CD8-positive, alpha-beta memory T cell (primary cell): ENCODE measurements at regions of chr7 and their contacts with region 1.

Region 1: GRCh38 chr7:99386584-99387238 is 12.2 kb downstream of the ARPC1B start:
- DNase-seq: peak in 3 of 5 donors; percentile 29 to 58 (median 46)
- H3K4me3 ChIP-seq: no peak overlapping the region
- H3K4me3 Mint-ChIP-seq: peak overlapping the region in 2 of 7 donors; percentile 22 to 86
- H3K27ac ChIP-seq: no peak overlapping the region
- H3K27ac Mint-ChIP-seq: peak overlapping the region in 7 of 8 donors; percentile 42 to 94 (median 77)
- H3K4me1 ChIP-seq: peaks cover 23% of the 10 kb centered on the region
- H3K4me1 Mint-ChIP-seq: peaks cover 12 to 25% (median 16%) of the 10 kb centered on the region in 3 donors
- H3K27me3 ChIP-seq: no peaks in the 10 kb centered on the region
- H3K27me3 Mint-ChIP-seq: no peaks in the 10 kb centered on the region

Region 2: GRCh38 chr7:99359465-99360159 is 27.1 kb before region 1 on chr7:
- CTCF ChIA-PET with region 1: interaction called, 13 read pairs
- POLR2A ChIA-PET with region 1: interaction called, 4 read pairs
- DNase-seq: no peak
- H3K4me3 ChIP-seq: no peak overlapping the region
- H3K4me3 Mint-ChIP-seq: no peak overlapping the region
- H3K27ac ChIP-seq: no peak overlapping the region
- H3K27ac Mint-ChIP-seq: peak overlapping the region in 2 of 8 donors; percentile 56 to 86
- H3K4me1 ChIP-seq: no peaks in the 10 kb centered on the region
- H3K4me1 Mint-ChIP-seq: no peaks in the 10 kb centered on the region
- H3K27me3 ChIP-seq: no peaks in the 10 kb centered on the region
- H3K27me3 Mint-ChIP-seq: no peaks in the 10 kb centered on the region

Region 3: GRCh38 chr7:99364961-99365817 is 21.5 kb before region 1 on chr7:
- CTCF ChIA-PET with region 1: interaction called, 30 read pairs
- POLR2A ChIA-PET with region 1: no interaction called
- DNase-seq: peak; percentile 49 to 75 (median 51)
- H3K4me3 ChIP-seq: no peak overlapping the region
- H3K4me3 Mint-ChIP-seq: peak overlapping the region in 1 of 7 donors; percentile 20
- H3K27ac ChIP-seq: no peak overlapping the region
- H3K27ac Mint-ChIP-seq: peak overlapping the region in 4 of 8 donors; percentile 50 to 74 (median 56)
- H3K4me1 ChIP-seq: no peaks in the 10 kb centered on the region
- H3K4me1 Mint-ChIP-seq: peaks cover 0 to 2% (median 0%) of the 10 kb centered on the region in 3 donors
- H3K27me3 ChIP-seq: no peaks in the 10 kb centered on the region
- H3K27me3 Mint-ChIP-seq: no peaks in the 10 kb centered on the region

Region 4: DNA sequence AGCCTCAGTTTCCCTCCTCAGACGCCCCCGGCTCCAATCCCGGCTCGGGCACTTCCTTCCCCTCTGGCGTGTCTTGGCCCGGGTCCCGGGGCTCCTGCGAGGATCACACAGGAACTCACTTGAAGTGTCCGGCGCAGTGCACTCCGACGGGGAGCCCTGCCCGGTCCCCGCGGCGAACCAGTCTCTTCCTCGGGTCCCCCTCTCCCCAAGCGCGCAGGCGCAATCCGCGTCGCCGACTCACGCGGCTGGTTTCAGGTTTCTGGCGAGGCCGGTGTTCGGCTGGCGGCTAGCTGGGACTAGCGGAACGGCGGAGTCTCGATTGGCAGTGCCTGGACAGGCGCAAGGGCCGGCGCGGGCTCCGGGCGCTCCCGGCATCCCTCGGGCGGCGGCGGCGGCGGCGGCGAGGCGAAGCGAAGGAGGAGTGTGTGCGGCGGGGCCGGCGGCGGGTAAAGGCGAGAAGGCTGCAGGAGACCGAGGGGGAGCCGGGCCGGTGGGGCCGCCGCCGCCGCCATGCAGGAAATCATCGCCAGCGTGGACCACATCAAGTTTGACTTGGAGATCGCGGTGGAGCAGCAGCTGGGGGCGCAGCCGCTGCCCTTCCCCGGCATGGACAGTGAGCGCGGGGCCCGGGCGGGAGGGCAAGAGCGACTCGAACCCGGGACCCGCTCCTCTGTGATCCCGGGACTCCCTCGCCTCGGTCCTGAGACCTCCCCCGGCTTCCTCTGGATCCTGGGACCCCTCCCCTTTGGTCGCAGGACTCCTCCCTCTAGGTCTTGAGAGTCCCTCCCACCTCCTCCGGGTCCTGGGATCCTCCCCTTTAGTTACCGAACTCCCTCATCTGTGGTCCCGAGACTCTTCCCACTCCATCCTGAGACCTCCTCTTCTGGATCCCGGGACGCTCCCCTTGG is 52.1 kb after region 1 on chr7 and contains the starts of genes CPSF4 and PTCD1:
- CTCF ChIA-PET with region 1: no interaction called
- POLR2A ChIA-PET with region 1: no interaction called
- DNase-seq: peak; percentile 76 to 90 (median 81)
- H3K4me3 ChIP-seq: peak within 1 kb of the TSS; percentile 90
- H3K4me3 Mint-ChIP-seq: peak within 1 kb of the TSS; percentile 94 to 99 (median 97)
- H3K27ac ChIP-seq: peak within 1 kb of the TSS; percentile 84
- H3K27ac Mint-ChIP-seq: peak within 1 kb of the TSS; percentile 84 to 98 (median 94)
- H3K4me1 ChIP-seq: peaks cover 11% of the 10 kb centered on the region
- H3K4me1 Mint-ChIP-seq: peaks cover 26 to 46% (median 36%) of the 10 kb centered on the region in 3 donors
- H3K27me3 ChIP-seq: no peaks in the 10 kb centered on the region
- H3K27me3 Mint-ChIP-seq: no peaks in the 10 kb centered on the region
- total RNA-seq, gene CPSF4: 58.7 to 66.6 TPM
- total RNA-seq, gene PTCD1: 8.4 to 11.4 TPM